ENCODE measurements at regions of chr19 and their contacts with region 1.

Region 1: GRCh38 chr19:48683349-48683748 is 10.5 kb upstream of the NTN5 start:
- DNase-seq: peak; percentile 52 to 68 (median 65)
- H3K4me3 ChIP-seq: peak overlapping the region in 5 of 7 experiments; percentile 10 to 67 (median 45)
- H3K27ac ChIP-seq: no peak overlapping the region
- H3K4me1 ChIP-seq: peaks cover 0 to 10% (median 2%) of the 10 kb centered on the region in 4 experiments
- H3K27me3 ChIP-seq: no peaks in the 10 kb centered on the region

Region 2: GRCh38 chr19:48784540-48784939 is 101.2 kb after region 1 on chr19:
- CTCF ChIA-PET with region 1: interaction called, 4 read pairs
- POLR2A ChIA-PET with region 1: interaction called, 11 read pairs
- DNase-seq: peak in 2 of 3 donors; percentile 48 to 69
- H3K4me3 ChIP-seq: no peak overlapping the region
- H3K27ac ChIP-seq: no peak overlapping the region
- H3K4me1 ChIP-seq: peaks cover 0 to 7% (median 3%) of the 10 kb centered on the region in 4 experiments
- H3K27me3 ChIP-seq: no peaks in the 10 kb centered on the region